ENCODE measurements at regions of chr17 and their contacts with region 1.

Region 1: DNA sequence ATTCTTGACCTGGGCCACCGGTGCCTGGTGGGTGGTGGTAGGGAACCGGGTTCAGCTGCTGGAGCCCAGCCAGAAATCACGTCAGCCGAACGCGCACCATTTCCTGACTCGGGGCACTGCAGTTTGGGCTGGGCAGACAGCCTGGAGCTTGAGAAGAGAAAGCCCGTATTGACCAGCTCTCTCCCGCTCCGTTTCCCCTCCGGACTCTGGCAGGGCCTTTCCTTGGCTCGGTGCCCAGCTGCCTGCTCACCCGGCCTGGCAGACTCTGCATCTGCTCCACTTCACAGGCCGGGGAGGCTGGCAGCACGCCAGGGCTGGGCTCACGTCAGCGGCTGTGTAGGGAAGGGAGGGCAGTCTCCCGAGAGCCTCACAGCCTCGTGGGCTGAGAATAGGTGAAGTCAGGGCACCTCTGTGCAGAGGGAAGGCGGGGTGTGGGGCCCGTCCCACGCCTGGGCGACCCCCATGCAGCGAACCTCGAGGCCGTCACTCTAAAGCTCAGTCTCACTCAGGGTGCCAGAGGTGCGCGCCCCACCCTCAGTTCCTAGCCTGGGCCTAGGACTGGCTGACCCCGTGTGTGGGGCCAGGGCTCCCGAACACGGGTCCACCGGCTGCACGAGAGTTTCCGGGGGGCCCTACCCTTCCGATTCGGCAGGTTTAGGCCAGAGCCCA is 59.1 kb downstream of the OR1D5 start:
- DNase-seq: peak; percentile 96 to 100
- H3K4me3 ChIP-seq: peak overlapping the region; percentile 18 to 59 (median 43)
- H3K27ac ChIP-seq: peak overlapping the region; percentile 90 to 94
- H3K4me1 ChIP-seq: peaks cover 5 to 15% of the 10 kb centered on the region in 2 donors
- H3K27me3 ChIP-seq: no peaks in the 10 kb centered on the region
- CTCF ChIP-seq: no peak
- POLR2A ChIP-seq: no peak

Region 2: DNA sequence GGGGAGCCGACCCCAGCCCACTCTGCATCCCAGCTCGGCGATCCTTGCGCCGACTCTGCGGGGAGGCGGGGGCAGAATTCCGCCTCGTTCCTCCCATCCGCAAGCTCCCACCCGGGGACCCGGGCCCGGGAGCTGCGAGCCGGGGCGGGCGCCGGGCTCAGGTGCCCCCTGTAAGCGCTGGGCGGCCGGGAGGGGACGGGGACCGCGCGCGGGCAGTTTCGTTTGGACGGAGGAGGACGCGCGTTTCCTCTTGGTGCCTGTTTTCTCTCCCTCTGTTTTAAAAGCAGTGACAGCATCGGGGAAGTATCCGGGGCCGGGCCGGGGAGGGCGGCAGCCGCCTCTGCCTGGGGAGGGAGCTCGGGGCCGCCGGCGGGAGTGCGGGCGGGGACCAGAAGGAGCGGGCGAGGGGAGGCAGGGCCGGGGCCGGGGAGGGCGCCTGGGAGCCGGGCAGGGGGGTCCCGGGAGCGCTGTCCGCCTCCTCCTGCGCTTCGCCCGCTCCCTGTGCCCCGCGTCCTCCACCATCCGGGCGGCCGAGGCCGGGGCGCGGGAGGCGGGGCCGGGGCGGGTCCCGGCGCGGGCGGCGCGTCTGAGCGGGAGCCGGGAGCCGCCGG is 151.1 kb before region 1 on chr17:
- intact Hi-C with region 1: loop called (anchors 10 kb)
- DNase-seq: peak in 1 of 2 donors; percentile 30
- H3K4me3 ChIP-seq: peak overlapping the region; percentile 58 to 87 (median 65)
- H3K27ac ChIP-seq: peak overlapping the region; percentile 84 to 91
- H3K4me1 ChIP-seq: peaks cover 2 to 4% of the 10 kb centered on the region in 2 donors
- H3K27me3 ChIP-seq: no peaks in the 10 kb centered on the region
- CTCF ChIP-seq: no peak
- POLR2A ChIP-seq: no peak

Region 3: GRCh38 chr17:2982854-2983253 is 21.4 kb before region 1 on chr17:
- intact Hi-C with region 1: no loop called
- DNase-seq: peak in 1 of 2 donors; percentile 17
- H3K4me3 ChIP-seq: no peak overlapping the region
- H3K27ac ChIP-seq: no peak overlapping the region
- H3K4me1 ChIP-seq: no peaks in the 10 kb centered on the region
- H3K27me3 ChIP-seq: no peaks in the 10 kb centered on the region
- CTCF ChIP-seq: no peak
- POLR2A ChIP-seq: no peak

Measured in breast epithelium (tissue), 4 donors.